CD4-positive, alpha-beta T cell (primary cell): ENCODE measurements at regions of chr1 and their contacts with region 1.

Region 1: GRCh38 chr1:214623430-214623829 is 20.4 kb downstream of the CENPF start:
- DNase-seq: no peak
- ATAC-seq: no peak
- H3K4me3 ChIP-seq: no peak overlapping the region
- H3K4me3 Mint-ChIP-seq: no peak overlapping the region
- H3K27ac ChIP-seq: no peak overlapping the region
- H3K27ac Mint-ChIP-seq: no peak overlapping the region
- H3K4me1 ChIP-seq: no peaks in the 10 kb centered on the region
- H3K4me1 Mint-ChIP-seq: peaks cover 5% of the 10 kb centered on the region
- H3K27me3 ChIP-seq: no peaks in the 10 kb centered on the region
- H3K27me3 Mint-ChIP-seq: no peaks in the 10 kb centered on the region
- CTCF ChIP-seq: no peak

Region 2: DNA sequence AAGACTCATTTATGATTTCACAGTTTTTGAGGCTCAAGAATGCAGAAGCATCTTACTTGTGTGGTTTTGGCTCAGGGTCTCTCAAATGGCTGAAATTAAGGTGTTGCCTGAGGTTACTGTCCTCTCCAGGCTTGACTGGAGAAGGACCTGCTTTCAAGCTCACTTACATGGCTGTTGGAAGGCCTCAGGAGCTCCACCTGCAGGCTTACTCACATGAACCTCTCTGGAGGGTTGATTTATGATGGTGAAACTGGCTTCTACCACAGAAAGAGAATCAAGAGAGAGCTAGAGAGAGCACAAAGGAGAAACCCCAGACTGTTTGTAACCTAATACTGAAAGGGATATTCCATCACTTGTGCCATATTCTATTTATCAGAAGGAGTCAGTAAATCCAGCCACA is 452.9 kb after region 1 on chr1:
- CTCF ChIA-PET with region 1: no interaction called
- POLR2A ChIA-PET with region 1: no interaction called
- intact Hi-C with region 1: loop called (anchors 5 to 10 kb)
- DNase-seq: peak in 1 of 14 experiments; percentile 4
- ATAC-seq: no peak
- H3K4me3 ChIP-seq: no peak overlapping the region
- H3K4me3 Mint-ChIP-seq: no peak overlapping the region
- H3K27ac ChIP-seq: no peak overlapping the region
- H3K27ac Mint-ChIP-seq: no peak overlapping the region
- H3K4me1 ChIP-seq: no peaks in the 10 kb centered on the region
- H3K4me1 Mint-ChIP-seq: no peaks in the 10 kb centered on the region
- H3K27me3 ChIP-seq: peaks cover 4 to 15% of the 10 kb centered on the region in 2 experiments
- H3K27me3 Mint-ChIP-seq: peaks cover 32% of the 10 kb centered on the region
- CTCF ChIP-seq: no peak